ENCODE measurements at regions of chr12 and their contacts with region 1.

Region 1: DNA sequence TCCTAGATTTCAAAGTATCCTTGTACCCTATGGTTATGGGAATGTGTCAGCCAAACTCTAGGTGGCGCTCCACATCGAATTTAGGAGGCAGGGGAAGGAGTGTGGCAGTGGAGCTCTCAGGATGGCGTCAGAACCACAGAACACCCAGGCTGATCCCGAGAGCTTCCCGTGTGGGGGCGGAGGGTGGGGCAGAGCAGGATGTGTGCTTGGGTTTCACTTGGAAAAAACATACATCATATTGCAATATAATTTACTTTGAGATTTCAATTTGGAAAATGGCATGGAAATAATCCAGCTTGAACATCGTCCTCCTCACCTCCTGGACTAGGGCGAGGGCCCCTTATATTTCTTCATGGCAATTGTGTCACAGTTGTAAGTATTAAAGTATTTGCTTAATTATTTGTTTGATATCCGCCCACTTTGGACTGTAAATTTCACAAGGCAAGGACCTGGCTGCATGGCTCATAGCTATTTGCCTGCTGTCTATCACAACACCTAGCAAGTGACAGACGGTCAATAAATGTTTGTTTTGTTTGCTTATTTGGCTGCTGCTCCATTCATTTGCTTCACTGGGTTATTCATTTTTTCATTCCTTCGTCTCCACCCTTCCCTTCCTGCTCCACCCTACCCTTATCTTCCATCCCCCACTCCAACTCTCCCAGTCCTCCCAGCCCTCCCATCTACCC is 221.5 kb upstream of the HMGA2 start:
- DNase-seq: peak; percentile 91
- H3K4me3 ChIP-seq: peak overlapping the region; percentile 18 to 77 (median 24)
- H3K27ac ChIP-seq: peak overlapping the region; percentile 95
- H3K4me1 ChIP-seq: peaks cover 50% of the 10 kb centered on the region
- H3K27me3 ChIP-seq: no peaks in the 10 kb centered on the region
- CTCF ChIP-seq: peak; percentile 58 to 78
- POLR2A ChIP-seq: peak; percentile 57

Region 2: GRCh38 chr12:64544371-64545080 is 1058.2 kb before region 1 on chr12:
- CTCF ChIA-PET with region 1: no interaction called
- POLR2A ChIA-PET with region 1: no interaction called
- dilution Hi-C with region 1: no loop called
- intact Hi-C with region 1: no loop called
- DNase-seq: no peak
- H3K4me3 ChIP-seq: no peak overlapping the region
- H3K27ac ChIP-seq: no peak overlapping the region
- H3K4me1 ChIP-seq: no peaks in the 10 kb centered on the region
- H3K27me3 ChIP-seq: peaks cover 3 to 4% of the 10 kb centered on the region in 2 experiments
- CTCF ChIP-seq: no peak
- POLR2A ChIP-seq: no peak

Region 3: GRCh38 chr12:64890873-64891468 is 711.8 kb before region 1 on chr12:
- CTCF ChIA-PET with region 1: no interaction called
- POLR2A ChIA-PET with region 1: no interaction called
- dilution Hi-C with region 1: no loop called
- intact Hi-C with region 1: loop called (anchors 2 kb)
- DNase-seq: peak; percentile 67
- H3K4me3 ChIP-seq: no peak overlapping the region
- H3K27ac ChIP-seq: no peak overlapping the region
- H3K4me1 ChIP-seq: peaks cover 36% of the 10 kb centered on the region
- H3K27me3 ChIP-seq: no peaks in the 10 kb centered on the region
- CTCF ChIP-seq: peak; percentile 35 to 53
- POLR2A ChIP-seq: no peak

Region 4: GRCh38 chr12:65392491-65392890 is 210.3 kb before region 1 on chr12:
- CTCF ChIA-PET with region 1: no interaction called
- POLR2A ChIA-PET with region 1: no interaction called
- dilution Hi-C with region 1: no loop called
- intact Hi-C with region 1: no loop called
- DNase-seq: no peak
- H3K4me3 ChIP-seq: no peak overlapping the region
- H3K27ac ChIP-seq: no peak overlapping the region
- H3K4me1 ChIP-seq: no peaks in the 10 kb centered on the region
- H3K27me3 ChIP-seq: no peaks in the 10 kb centered on the region
- CTCF ChIP-seq: no peak
- POLR2A ChIP-seq: no peak

Region 5: GRCh38 chr12:65536876-65537661 is 65.7 kb before region 1 on chr12:
- CTCF ChIA-PET with region 1: interaction called, 23 read pairs
- POLR2A ChIA-PET with region 1: interaction called, 5 read pairs
- dilution Hi-C with region 1: no loop called
- intact Hi-C with region 1: loop called (anchors 1 kb)
- DNase-seq: peak; percentile 94
- H3K4me3 ChIP-seq: no peak overlapping the region
- H3K27ac ChIP-seq: peak overlapping the region; percentile 98
- H3K4me1 ChIP-seq: peaks cover 58% of the 10 kb centered on the region
- H3K27me3 ChIP-seq: no peaks in the 10 kb centered on the region
- CTCF ChIP-seq: no peak
- POLR2A ChIP-seq: peak; percentile 45

Region 6: GRCh38 chr12:65620046-65620445 is 17.3 kb after region 1 on chr12:
- CTCF ChIA-PET with region 1: interaction called, 11 read pairs
- POLR2A ChIA-PET with region 1: no interaction called
- dilution Hi-C with region 1: no loop called
- intact Hi-C with region 1: no loop called
- DNase-seq: no peak
- H3K4me3 ChIP-seq: no peak overlapping the region
- H3K27ac ChIP-seq: no peak overlapping the region
- H3K4me1 ChIP-seq: peaks cover under 1% of the 10 kb centered on the region
- H3K27me3 ChIP-seq: no peaks in the 10 kb centered on the region
- CTCF ChIP-seq: no peak
- POLR2A ChIP-seq: no peak

Region 7: DNA sequence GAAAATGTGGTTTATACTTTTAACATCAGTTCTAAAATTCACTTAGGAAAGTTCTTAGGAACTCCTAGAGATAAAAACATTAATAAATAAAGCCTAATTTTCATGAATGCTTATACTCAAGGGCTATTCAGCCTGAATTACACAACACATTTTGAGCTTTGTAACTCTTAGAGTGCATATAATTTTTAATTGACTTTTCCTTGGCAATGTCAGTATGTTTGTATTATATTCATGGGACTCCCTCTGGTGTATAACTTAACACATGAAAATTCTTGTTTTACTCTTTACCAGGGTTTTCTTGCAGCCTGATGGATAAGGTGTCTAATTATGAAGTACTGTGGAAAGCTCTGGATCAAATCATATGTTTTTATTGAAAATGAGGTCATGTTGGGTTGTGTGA is 71.0 kb after region 1 on chr12:
- CTCF ChIA-PET with region 1: interaction called, 41 read pairs
- POLR2A ChIA-PET with region 1: interaction called, 3 read pairs
- dilution Hi-C with region 1: no loop called
- intact Hi-C with region 1: loop called (anchors 1 kb)
- DNase-seq: peak; percentile 50
- H3K4me3 ChIP-seq: no peak overlapping the region
- H3K27ac ChIP-seq: no peak overlapping the region
- H3K4me1 ChIP-seq: peaks cover 12% of the 10 kb centered on the region
- H3K27me3 ChIP-seq: no peaks in the 10 kb centered on the region
- CTCF ChIP-seq: peak in 1 of 2 donors; percentile 2
- POLR2A ChIP-seq: no peak

Region 8: DNA sequence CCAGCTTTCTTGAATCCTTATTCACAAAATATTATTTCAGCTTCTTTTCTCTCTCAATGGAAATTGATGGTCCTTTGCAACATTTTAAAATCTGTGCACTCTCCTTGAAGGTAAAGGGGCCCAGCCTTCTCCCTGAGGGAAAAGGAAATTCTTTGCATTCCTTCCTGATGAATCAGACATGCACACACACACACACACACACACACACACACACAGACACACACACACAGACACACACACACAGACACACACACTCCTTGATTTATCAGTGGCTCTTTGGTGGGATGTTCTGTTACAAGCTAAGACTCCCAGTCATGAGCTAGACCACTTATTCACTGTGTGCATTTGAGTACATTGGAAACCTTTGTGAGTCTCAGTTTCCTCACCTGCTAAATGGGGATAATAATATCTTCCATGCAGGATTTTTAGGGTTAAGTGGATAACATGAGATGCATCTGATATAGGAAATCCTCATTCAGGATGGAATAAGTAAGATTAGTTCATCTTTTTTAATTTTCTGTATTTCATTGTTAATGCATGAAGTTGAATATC is 176.4 kb after region 1 on chr12:
- CTCF ChIA-PET with region 1: interaction called, 4 read pairs
- POLR2A ChIA-PET with region 1: no interaction called
- dilution Hi-C with region 1: no loop called
- intact Hi-C with region 1: loop called (anchors 1 kb)
- DNase-seq: peak; percentile 51
- H3K4me3 ChIP-seq: no peak overlapping the region
- H3K27ac ChIP-seq: peak overlapping the region; percentile 46
- H3K4me1 ChIP-seq: peaks cover 17% of the 10 kb centered on the region
- H3K27me3 ChIP-seq: no peaks in the 10 kb centered on the region
- CTCF ChIP-seq: no peak
- POLR2A ChIP-seq: no peak

Region 9: GRCh38 chr12:65986047-65986446 is 383.3 kb after region 1 on chr12:
- CTCF ChIA-PET with region 1: interaction called, 4 read pairs
- POLR2A ChIA-PET with region 1: no interaction called
- dilution Hi-C with region 1: no loop called
- intact Hi-C with region 1: loop called (anchors 2 kb)
- DNase-seq: peak; percentile 28
- H3K4me3 ChIP-seq: no peak overlapping the region
- H3K27ac ChIP-seq: no peak overlapping the region
- H3K4me1 ChIP-seq: no peaks in the 10 kb centered on the region
- H3K27me3 ChIP-seq: no peaks in the 10 kb centered on the region
- CTCF ChIP-seq: peak in 1 of 2 donors; percentile 12
- POLR2A ChIP-seq: no peak